Heart right ventricle (tissue), 16 donors: ENCODE measurements at regions of chr16 and their contacts with region 1.

Region 1: GRCh38 chr16:28935924-28936783 is 4.4 kb downstream of the CD19 start:
- DNase-seq: peak; percentile 65 to 85
- ATAC-seq: peak; percentile 90 to 97 (median 94)
- H3K4me3 ChIP-seq: peak overlapping the region in 7 of 10 donors; percentile 10 to 41 (median 31)
- H3K27ac ChIP-seq: no peak overlapping the region
- H3K4me1 ChIP-seq: peaks cover 0 to 10% (median 4%) of the 10 kb centered on the region in 9 donors
- H3K27me3 ChIP-seq: peaks cover 0 to 2% (median 0%) of the 10 kb centered on the region in 7 donors
- CTCF ChIP-seq: no peak

Region 2: GRCh38 chr16:28823872-28824716 is 112.1 kb before region 1 on chr16:
- intact Hi-C with region 1: loop called in 3 of 10 experiments (anchors 5 to 10 kb)
- DNase-seq: peak; percentile 97 to 99
- ATAC-seq: peak; percentile 92 to 97 (median 95)
- H3K4me3 ChIP-seq: peak overlapping the region; percentile 79 to 100 (median 100)
- H3K27ac ChIP-seq: peak overlapping the region; percentile 92 to 100 (median 100)
- H3K4me1 ChIP-seq: peaks cover 8 to 34% (median 23%) of the 10 kb centered on the region in 9 donors
- H3K27me3 ChIP-seq: no peaks in the 10 kb centered on the region
- CTCF ChIP-seq: peak in 7 of 9 donors; percentile 24 to 49 (median 39)

Region 3: GRCh38 chr16:28917095-28917494 is 19.1 kb before region 1 on chr16:
- intact Hi-C with region 1: loop called in 1 of 10 experiments (anchors 2 kb)
- DNase-seq: no peak
- ATAC-seq: no peak
- H3K4me3 ChIP-seq: no peak overlapping the region
- H3K27ac ChIP-seq: no peak overlapping the region
- H3K4me1 ChIP-seq: no peaks in the 10 kb centered on the region
- H3K27me3 ChIP-seq: no peaks in the 10 kb centered on the region
- CTCF ChIP-seq: no peak

Region 4: DNA sequence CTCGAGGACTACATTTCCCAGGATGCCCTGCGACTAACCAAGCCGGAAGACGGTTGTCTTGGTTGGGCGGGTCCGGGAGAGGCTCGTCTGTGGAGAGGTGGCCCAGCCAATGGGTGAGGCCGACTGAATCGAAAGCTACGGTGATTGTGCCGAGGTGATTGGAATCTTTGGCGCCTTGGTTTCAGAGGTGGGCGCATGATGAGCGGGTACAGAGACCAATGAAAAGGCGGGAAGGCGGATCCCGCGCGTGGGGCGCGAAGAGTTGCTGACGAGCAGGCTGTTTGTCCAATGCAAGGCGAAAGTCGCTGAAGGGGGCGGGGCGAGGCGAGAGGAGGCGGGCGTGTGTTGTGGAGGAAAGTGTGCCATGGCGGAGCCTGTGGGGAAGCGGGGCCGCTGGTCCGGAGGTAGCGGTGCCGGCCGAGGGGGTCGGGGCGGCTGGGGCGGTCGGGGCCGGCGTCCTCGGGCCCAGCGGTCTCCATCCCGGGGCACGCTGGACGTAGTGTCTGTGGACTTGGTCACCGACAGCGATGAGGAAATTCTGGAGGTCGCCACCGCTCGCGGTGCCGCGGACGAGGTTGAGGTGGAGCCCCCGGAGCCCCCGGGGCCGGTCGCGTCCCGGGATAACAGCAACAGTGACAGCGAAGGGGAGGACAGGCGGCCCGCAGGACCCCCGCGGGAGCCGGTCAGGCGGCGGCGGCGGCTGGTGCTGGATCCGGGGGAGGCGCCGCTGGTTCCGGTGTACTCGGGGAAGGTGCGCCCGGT is 14.7 kb after region 1 on chr16 and contains the start of gene NFATC2IP:
- intact Hi-C with region 1: no loop called
- DNase-seq: peak; percentile 99 to 100
- ATAC-seq: peak; percentile 97 to 100 (median 98)
- H3K4me3 ChIP-seq: peak within 1 kb of the TSS; percentile 75 to 99 (median 92)
- H3K27ac ChIP-seq: peak within 1 kb of the TSS; percentile 19 to 94 (median 90)
- H3K4me1 ChIP-seq: peaks cover 6 to 23% (median 16%) of the 10 kb centered on the region in 9 donors
- H3K27me3 ChIP-seq: no peaks in the 10 kb centered on the region
- CTCF ChIP-seq: no peak
- total RNA-seq, gene NFATC2IP: 13.8 to 22.5 (median 17.0) TPM

Region 5: GRCh38 chr16:28964072-28964471 is 27.9 kb after region 1 on chr16:
- intact Hi-C with region 1: no loop called
- DNase-seq: no peak
- ATAC-seq: no peak
- H3K4me3 ChIP-seq: no peak overlapping the region
- H3K27ac ChIP-seq: no peak overlapping the region
- H3K4me1 ChIP-seq: no peaks in the 10 kb centered on the region
- H3K27me3 ChIP-seq: no peaks in the 10 kb centered on the region
- CTCF ChIP-seq: no peak